ENCODE measurements at regions of chr3 and their contacts with region 1.

Region 1: GRCh38 chr3:4722103-4722502 is 229.0 kb downstream of the ITPR1 start:
- DNase-seq: peak in 2 of 9 donors; percentile 27 to 33
- ATAC-seq: peak; percentile 76
- H3K4me3 ChIP-seq: no peak overlapping the region
- H3K4me3 Mint-ChIP-seq: peak overlapping the region in 1 of 10 donors; percentile 33
- H3K27ac ChIP-seq: no peak overlapping the region
- H3K27ac Mint-ChIP-seq: peak overlapping the region in 2 of 9 donors; percentile 34 to 82
- H3K4me1 ChIP-seq: no peaks in the 10 kb centered on the region
- H3K4me1 Mint-ChIP-seq: peaks cover 0 to 67% (median 9%) of the 10 kb centered on the region in 7 donors
- H3K27me3 ChIP-seq: no peaks in the 10 kb centered on the region
- H3K27me3 Mint-ChIP-seq: no peaks in the 10 kb centered on the region

Region 2: GRCh38 chr3:4906107-4906621 is 184.1 kb after region 1 on chr3:
- CTCF ChIA-PET with region 1: no interaction called
- POLR2A ChIA-PET with region 1: no interaction called
- intact Hi-C with region 1: loop called (anchors 5 to 10 kb)
- DNase-seq: no peak
- ATAC-seq: no peak
- H3K4me3 ChIP-seq: no peak overlapping the region
- H3K4me3 Mint-ChIP-seq: peak overlapping the region in 2 of 10 donors; percentile 29 to 38
- H3K27ac ChIP-seq: no peak overlapping the region
- H3K27ac Mint-ChIP-seq: peak overlapping the region in 4 of 9 donors; percentile 7 to 75 (median 38)
- H3K4me1 ChIP-seq: peaks cover 14 to 35% of the 10 kb centered on the region in 2 donors
- H3K4me1 Mint-ChIP-seq: peaks cover 33 to 85% (median 58%) of the 10 kb centered on the region in 7 donors
- H3K27me3 ChIP-seq: no peaks in the 10 kb centered on the region
- H3K27me3 Mint-ChIP-seq: no peaks in the 10 kb centered on the region

Measured in naive thymus-derived CD4-positive, alpha-beta T cell (primary cell).